HEK293 (cell line): ENCODE measurements at regions of chr10 and their contacts with region 1.

Region 1: DNA sequence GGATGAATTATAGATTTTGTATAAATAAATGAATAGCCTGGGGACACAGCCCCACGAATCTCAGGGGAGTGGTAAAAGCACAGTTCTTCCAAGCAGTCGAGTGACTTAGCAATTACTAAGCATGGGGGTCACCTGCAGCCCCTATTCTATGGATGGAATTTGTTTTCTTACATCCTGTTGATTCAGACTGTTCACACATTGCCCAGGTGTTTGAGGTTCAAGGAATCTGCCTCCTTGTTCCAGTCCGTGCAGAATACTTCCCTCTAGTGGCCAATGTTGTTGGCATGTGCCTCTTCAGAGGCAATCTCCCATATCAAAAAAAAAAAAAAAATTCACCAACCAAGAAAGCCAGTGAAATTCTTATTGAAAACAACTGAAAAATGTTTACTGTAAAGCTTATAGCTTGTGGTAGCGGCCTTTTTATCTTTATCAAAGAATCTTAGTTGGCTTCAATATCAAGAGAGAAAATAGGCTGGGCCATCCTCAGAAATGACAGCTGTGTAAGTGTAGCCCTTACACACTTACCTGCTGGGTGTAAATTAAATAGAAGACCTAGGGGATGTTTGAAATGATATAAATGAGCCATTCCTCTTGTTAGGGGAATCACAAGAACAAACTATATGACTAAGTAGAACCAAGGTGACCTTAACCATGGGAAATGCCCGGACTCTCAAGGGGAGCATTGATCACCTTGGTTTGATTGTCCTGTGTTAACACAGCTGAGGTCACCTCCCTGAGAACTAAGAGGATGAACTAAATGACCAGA is 7.8 kb downstream of the LIPM start:
- H3K4me3 ChIP-seq: no peak overlapping the region
- H3K27ac ChIP-seq: no peak overlapping the region
- H3K4me1 ChIP-seq: no peaks in the 10 kb centered on the region
- CTCF ChIP-seq: peak; percentile 33; the same call in 1 of the 2 replicates

Region 2: DNA sequence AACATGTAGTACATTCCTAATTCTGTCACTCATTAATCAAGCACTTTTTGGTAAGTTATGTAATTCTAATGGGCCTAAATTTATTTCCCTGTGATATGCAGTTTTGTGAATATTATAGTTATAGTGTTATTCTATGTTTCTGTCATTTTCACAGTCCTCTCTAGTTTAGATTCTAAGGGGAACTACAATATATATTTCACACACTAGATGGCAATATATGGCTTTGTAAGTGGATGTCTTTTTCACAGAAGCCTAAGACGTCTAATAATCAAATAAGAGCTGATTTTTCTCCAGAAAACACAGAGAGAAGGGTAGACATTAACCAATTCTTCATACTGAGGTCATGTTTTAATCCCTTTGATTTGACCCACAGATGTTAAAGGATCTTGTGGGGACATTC is 245.3 kb before region 1 on chr10:
- CTCF ChIA-PET with region 1: interaction called, 28 read pairs
- POLR2A ChIA-PET with region 1: no interaction called
- H3K4me3 ChIP-seq: no peak overlapping the region
- H3K27ac ChIP-seq: no peak overlapping the region
- H3K4me1 ChIP-seq: no peaks in the 10 kb centered on the region
- CTCF ChIP-seq: no peak; the same call in 1 of the 2 replicates

Region 3: DNA sequence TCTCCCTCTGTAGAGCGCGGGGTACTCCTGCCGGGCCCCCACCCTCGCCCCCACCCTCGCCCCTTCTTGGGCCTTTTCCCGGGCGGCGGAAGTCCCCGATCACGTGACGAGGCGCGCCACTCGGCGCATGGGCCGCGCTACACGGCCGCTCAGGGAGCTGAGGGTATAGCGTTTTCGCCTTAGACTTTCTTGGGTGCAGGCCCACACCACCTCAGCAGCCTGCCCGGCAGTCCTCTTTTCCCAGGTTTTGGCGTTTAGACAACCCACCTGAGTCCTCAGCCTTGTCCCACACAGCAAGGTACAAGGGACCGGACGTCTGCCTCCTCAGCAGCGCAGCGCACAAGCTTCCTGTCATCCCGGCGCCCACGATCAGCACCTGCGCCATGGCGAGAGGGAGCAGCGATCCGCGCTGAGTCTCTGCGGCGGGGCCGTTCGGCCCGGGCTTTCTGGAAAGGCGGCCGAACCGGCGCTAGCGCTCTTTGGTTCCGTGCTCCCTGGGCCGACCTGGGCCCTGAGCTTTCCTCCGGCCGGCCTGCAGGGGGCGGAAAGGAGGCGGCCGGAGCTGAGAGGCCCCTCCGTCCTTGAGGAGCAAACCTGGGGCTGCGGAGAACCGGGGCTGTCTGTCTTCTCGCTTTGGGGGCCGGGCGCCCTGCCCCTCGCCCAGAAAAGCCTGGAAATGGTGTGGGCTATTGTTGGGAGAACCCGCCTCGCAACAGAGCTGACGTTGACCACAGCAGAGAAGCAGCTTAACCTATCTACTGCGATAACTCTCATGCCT is 227.4 kb before region 1 on chr10 and contains the start of gene RNLS:
- CTCF ChIA-PET with region 1: interaction called, 10 read pairs
- POLR2A ChIA-PET with region 1: no interaction called
- H3K4me3 ChIP-seq: no peak within 1 kb of the TSS
- H3K27ac ChIP-seq: no peak within 1 kb of the TSS
- H3K4me1 ChIP-seq: no peaks in the 10 kb centered on the region
- CTCF ChIP-seq: no peak

Region 4: DNA sequence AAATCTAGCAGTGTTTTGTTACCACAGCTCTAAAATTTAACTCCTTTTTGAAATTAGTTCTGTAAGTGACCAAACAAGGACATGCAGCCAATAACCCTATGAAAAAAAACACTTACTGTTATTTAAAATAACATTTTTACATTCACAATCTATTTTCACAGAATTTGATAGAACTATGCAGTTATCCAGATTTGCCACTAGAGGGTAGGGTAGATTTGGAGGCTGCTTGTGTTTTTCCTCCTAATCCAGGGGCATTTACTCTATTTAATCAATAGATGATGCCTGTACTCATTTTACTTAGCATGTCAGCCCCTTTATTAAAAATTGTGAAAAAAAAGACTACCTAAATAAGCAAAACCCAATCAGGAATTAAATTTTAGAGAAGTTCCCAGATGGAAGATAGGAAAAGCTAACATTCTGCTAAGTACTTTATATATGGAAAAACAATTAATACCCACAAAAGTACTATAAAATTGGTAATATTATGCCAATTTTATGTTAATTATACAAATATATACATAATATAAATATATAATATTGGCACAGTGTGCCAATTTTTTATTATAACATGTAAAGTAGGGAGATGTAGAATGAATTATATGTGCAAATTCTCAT is 122.4 kb before region 1 on chr10:
- CTCF ChIA-PET with region 1: interaction called, 17 read pairs
- POLR2A ChIA-PET with region 1: no interaction called
- H3K4me3 ChIP-seq: no peak overlapping the region
- H3K27ac ChIP-seq: no peak overlapping the region
- H3K4me1 ChIP-seq: no peaks in the 10 kb centered on the region
- CTCF ChIP-seq: no peak

Region 5: GRCh38 chr10:88820748-88821389 is 10.5 kb after region 1 on chr10:
- CTCF ChIA-PET with region 1: interaction called, 10 read pairs
- POLR2A ChIA-PET with region 1: no interaction called
- H3K4me3 ChIP-seq: no peak overlapping the region
- H3K27ac ChIP-seq: no peak overlapping the region
- H3K4me1 ChIP-seq: no peaks in the 10 kb centered on the region
- CTCF ChIP-seq: no peak

Region 6: DNA sequence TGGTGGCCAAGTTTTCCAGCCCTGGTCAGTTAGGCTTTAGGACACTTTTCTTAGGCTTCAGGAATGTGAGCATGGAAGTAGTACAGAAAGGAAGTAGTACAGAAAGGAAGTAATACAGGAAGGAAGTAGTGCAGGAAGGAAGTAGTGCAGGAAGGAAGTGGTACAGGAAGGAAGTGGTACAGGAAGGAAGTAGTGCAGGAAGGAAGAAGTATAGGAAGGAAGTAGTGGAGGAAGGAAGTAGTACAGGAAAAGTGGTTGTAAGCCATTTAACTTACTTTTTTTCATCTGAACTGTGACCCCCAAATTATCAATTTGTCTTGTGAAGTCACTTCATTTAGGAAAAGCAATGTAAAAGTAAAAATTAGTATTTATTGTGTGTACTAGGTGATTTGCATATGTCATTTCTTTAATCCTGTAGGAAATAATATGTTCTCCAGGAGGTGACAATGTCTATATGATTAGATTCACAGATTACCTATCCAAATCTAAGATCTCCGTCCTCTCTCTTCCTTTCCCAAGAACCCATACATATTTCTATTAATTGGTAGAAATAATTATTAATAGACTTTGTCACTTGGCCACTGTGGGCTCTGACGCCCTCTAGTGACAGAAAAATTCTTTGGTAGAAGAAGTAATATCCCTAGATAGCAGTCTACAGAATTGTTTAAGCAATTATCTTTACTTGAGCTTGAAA is 176.3 kb after region 1 on chr10:
- CTCF ChIA-PET with region 1: no interaction called
- POLR2A ChIA-PET with region 1: no interaction called
- H3K4me3 ChIP-seq: no peak overlapping the region
- H3K27ac ChIP-seq: no peak overlapping the region
- H3K4me1 ChIP-seq: peaks cover 7% of the 10 kb centered on the region
- CTCF ChIP-seq: no peak

Region 7: DNA sequence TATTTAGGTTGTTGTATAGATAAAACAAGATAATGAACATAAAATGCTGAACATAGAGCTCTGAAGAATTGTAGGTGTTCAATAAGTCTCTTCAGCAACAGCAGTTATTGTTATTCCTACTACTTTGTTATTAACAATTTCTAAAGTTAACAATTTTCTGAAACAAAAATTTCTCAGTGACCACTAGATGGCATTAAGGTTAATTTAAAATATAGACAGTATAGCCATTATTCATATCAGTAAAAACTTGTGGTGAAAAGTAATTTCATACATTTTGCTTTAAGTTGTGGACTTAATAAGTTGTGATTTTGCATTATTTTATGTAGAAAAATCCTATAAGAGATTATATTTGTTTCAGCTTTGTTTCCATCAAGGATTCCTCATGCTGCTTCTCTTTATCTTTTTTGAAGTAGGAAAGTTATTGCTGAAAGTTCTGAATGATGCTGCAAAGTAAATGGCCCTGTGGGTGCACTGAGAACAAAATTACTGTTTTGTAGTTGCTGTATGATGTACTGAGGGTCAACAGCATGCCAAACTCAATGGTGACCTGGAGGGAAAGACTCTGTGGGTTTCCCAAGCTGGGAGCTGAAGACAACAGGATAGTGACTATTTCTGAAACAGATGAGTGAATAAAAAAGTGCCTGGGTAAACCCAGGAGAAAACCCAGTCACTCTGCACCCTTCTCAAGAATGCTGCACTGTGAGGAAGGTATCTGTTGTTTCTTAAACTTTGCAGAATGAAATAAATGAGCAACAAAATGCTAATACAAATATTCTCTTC is 1144.6 kb after region 1 on chr10:
- CTCF ChIA-PET with region 1: no interaction called
- POLR2A ChIA-PET with region 1: no interaction called
- H3K4me3 ChIP-seq: no peak overlapping the region
- H3K27ac ChIP-seq: no peak overlapping the region
- H3K4me1 ChIP-seq: no peaks in the 10 kb centered on the region
- CTCF ChIP-seq: no peak